ENCODE measurements at regions of chr11 and their contacts with region 1.

Region 1: GRCh38 chr11:66638177-66639065 is at the start of gene RBM4:
- DNase-seq: peak; percentile 100
- H3K4me3 ChIP-seq: peak within 1 kb of the TSS; percentile 95
- H3K27ac ChIP-seq: peak within 1 kb of the TSS; percentile 71
- H3K4me1 ChIP-seq: peaks cover 55% of the 10 kb centered on the region
- CTCF ChIP-seq: 0 out of 2 replicates have a peak, but pooled peaks have one; percentile 29
- total RNA-seq, gene RBM4: 66.0 and 93.9 TPM in 2 replicates

Region 2: GRCh38 chr11:66579017-66579606 is 59.3 kb before region 1 on chr11:
- CTCF ChIA-PET with region 1: no interaction called
- POLR2A ChIA-PET with region 1: interaction called, 3 read pairs
- intact Hi-C with region 1: loop called (anchors 5 kb)
- DNase-seq: peak; percentile 73
- H3K4me3 ChIP-seq: no peak overlapping the region
- H3K27ac ChIP-seq: no peak overlapping the region
- H3K4me1 ChIP-seq: no peaks in the 10 kb centered on the region
- CTCF ChIP-seq: peak; percentile 91

Region 3: DNA sequence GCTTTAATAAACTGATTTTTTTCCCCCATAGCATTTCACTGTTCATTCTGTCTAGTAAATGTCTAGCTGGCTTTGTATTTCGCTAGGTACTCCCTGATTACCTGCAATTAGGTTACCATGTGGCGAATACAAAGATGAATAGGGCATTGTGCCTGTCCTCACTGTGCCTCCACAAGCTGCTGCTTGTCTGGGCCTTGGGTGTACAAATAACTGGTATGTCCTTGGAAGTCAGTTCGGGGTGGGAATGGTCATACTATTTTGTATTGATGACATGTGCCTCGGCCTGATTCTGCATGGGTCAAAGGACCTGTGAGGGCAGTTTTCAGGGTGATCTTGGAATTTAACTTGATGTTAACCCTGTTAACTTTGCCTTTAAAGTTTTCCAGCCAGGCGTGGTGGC is 11.5 kb after region 1 on chr11:
- CTCF ChIA-PET with region 1: no interaction called
- POLR2A ChIA-PET with region 1: interaction called, 10 read pairs
- intact Hi-C with region 1: no loop called
- DNase-seq: no peak
- H3K4me3 ChIP-seq: no peak overlapping the region
- H3K27ac ChIP-seq: no peak overlapping the region
- H3K4me1 ChIP-seq: no peaks in the 10 kb centered on the region
- CTCF ChIP-seq: no peak

Region 4: GRCh38 chr11:66694732-66695207 is 56.3 kb after region 1 on chr11:
- CTCF ChIA-PET with region 1: no interaction called
- POLR2A ChIA-PET with region 1: no interaction called
- intact Hi-C with region 1: no loop called
- DNase-seq: peak; percentile 88
- H3K4me3 ChIP-seq: no peak overlapping the region
- H3K27ac ChIP-seq: no peak overlapping the region
- H3K4me1 ChIP-seq: peaks cover 6% of the 10 kb centered on the region
- CTCF ChIP-seq: peak; percentile 98

Region 5: DNA sequence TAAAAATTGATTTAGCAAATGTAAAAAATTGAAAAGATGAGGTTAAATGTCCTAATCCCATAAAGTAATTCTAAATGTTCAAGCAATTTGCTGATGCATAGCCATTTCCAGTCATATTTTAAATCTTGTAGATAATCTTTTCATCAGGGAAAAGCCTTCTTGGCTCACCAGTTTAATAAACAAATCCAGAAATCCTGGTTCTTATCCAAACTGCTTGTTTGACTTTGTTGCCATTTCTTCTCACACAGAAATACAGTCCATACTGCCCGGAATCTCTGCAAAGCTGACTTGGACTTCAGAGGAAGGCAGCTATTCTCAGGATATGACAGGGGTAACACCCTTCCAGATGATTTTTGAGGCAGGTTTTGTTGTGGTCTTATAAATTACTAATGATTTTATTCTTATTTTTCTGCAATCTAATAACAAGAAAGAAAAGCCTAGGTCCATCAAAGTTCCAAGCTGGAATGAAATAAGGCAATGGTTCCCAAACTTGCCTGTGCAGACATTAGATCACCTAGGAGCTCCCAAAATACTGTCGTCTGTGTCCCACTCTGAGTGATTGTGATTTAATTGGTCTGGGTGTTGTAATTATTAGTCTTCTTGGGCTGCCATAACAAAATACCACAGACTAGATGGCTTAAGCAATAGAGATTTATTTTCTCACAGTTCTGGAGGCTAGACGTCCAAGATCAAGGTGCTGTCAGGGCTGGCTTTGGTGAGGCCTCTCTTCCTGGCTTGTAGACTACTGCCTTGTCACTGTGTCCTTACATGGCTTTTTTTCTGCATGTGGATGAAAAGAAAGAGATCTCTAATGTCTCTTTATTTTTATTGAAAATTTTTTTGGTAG is 149.7 kb after region 1 on chr11:
- CTCF ChIA-PET with region 1: no interaction called
- POLR2A ChIA-PET with region 1: no interaction called
- intact Hi-C with region 1: no loop called
- DNase-seq: no peak
- H3K4me3 ChIP-seq: no peak overlapping the region
- H3K27ac ChIP-seq: no peak overlapping the region
- H3K4me1 ChIP-seq: peaks cover 12% of the 10 kb centered on the region
- CTCF ChIP-seq: no peak